Thyroid gland (tissue), 4 donors: ENCODE measurements at regions of chr15 and their contacts with region 1.

Region 1: GRCh38 chr15:82197733-82198594 is 64.6 kb downstream of the EFL1 start:
- DNase-seq: peak; percentile 59 to 70
- H3K4me3 ChIP-seq: no peak overlapping the region
- H3K27ac ChIP-seq: no peak overlapping the region
- H3K4me1 ChIP-seq: no peaks in the 10 kb centered on the region
- H3K27me3 ChIP-seq: no peaks in the 10 kb centered on the region
- CTCF ChIP-seq: peak; percentile 37 to 83 (median 70)
- POLR2A ChIP-seq: no peak

Region 2: GRCh38 chr15:81473177-81473576 is 724.8 kb before region 1 on chr15:
- intact Hi-C with region 1: loop called (anchors 10 kb)
- DNase-seq: no peak
- H3K4me3 ChIP-seq: no peak overlapping the region
- H3K27ac ChIP-seq: no peak overlapping the region
- H3K4me1 ChIP-seq: no peaks in the 10 kb centered on the region
- H3K27me3 ChIP-seq: no peaks in the 10 kb centered on the region
- CTCF ChIP-seq: no peak
- POLR2A ChIP-seq: no peak

Region 3: DNA sequence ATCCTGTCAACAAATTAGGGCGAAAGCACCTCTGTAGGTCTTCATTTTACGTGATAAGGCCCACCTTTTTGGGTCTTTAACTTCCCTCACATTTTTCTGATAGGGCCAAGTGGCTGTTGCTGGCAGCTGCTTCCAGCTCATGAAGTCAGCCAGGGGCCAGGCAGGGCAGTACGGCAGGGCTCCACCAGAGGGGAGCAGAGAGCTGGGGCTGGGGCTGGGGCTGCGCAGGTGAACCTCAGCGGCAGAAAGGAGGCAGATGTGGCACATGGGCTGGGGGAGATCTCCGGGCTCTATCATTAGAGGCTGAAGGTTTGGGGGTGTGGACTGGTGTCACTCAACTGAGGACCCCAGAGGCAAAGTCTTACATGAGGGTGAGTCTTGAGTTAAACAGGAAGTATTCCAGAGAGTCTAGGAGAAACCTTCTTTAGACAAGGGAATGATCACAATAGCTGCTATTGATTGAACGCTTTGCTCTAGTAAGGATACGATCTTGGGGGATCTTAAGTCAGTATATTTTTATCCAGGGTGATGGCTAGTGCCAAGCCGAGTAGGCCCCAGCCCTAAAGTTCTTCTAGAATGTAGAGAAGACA is 89.4 kb before region 1 on chr15:
- intact Hi-C with region 1: loop called (anchors 5 kb)
- DNase-seq: peak; percentile 13 to 17
- H3K4me3 ChIP-seq: no peak overlapping the region
- H3K27ac ChIP-seq: no peak overlapping the region
- H3K4me1 ChIP-seq: no peaks in the 10 kb centered on the region
- H3K27me3 ChIP-seq: no peaks in the 10 kb centered on the region
- CTCF ChIP-seq: peak in 5 of 6 experiments; percentile 14 to 57 (median 37)
- POLR2A ChIP-seq: no peak

Region 4: GRCh38 chr15:82272154-82272553 is 74.2 kb after region 1 on chr15:
- intact Hi-C with region 1: no loop called
- DNase-seq: no peak
- H3K4me3 ChIP-seq: no peak overlapping the region
- H3K27ac ChIP-seq: no peak overlapping the region
- H3K4me1 ChIP-seq: no peaks in the 10 kb centered on the region
- H3K27me3 ChIP-seq: no peaks in the 10 kb centered on the region
- CTCF ChIP-seq: no peak
- POLR2A ChIP-seq: no peak